AG04449 (cell line): ENCODE measurements at regions of chr2 and their contacts with region 1.

Region 1: GRCh38 chr2:20015472-20016083 is 3.1 kb upstream of the MATN3 start:
- DNase-seq: no peak
- H3K4me3 ChIP-seq: no peak overlapping the region
- CTCF ChIP-seq: peak; percentile 20

Region 2: GRCh38 chr2:19944205-19944845 is 71.3 kb before region 1 on chr2:
- CTCF ChIA-PET with region 1: interaction called, 13 read pairs
- POLR2A ChIA-PET with region 1: no interaction called
- DNase-seq: no peak
- H3K4me3 ChIP-seq: no peak overlapping the region
- CTCF ChIP-seq: no peak

Region 3: DNA sequence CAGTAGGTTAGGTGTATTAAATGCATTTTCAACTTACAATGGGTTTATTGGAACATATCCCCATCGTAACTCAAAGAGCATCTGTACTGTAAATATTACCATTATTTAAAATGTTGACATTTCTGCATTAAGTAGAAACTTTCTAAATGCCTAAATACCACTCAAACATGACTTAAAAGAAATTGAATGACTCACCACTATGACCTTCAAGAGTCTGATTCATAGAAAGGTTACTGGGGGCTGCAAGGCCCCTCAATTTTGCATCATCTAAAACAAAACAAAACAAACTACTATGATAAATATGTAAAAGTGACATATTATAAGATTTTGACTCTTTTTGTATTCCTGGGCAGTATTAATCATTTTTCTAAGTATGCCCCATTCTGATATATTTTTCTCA is 33.3 kb before region 1 on chr2:
- CTCF ChIA-PET with region 1: interaction called, 13 read pairs
- POLR2A ChIA-PET with region 1: no interaction called
- DNase-seq: no peak
- H3K4me3 ChIP-seq: no peak overlapping the region
- CTCF ChIP-seq: no peak

Region 4: GRCh38 chr2:20027705-20028434 is 12.3 kb after region 1 on chr2:
- CTCF ChIA-PET with region 1: interaction called, 84 read pairs
- POLR2A ChIA-PET with region 1: no interaction called
- DNase-seq: no peak
- H3K4me3 ChIP-seq: no peak overlapping the region
- CTCF ChIP-seq: no peak

Region 5: GRCh38 chr2:20062615-20063545 is 47.3 kb after region 1 on chr2:
- CTCF ChIA-PET with region 1: interaction called, 26 read pairs
- POLR2A ChIA-PET with region 1: no interaction called
- DNase-seq: peak; percentile 90
- H3K4me3 ChIP-seq: no peak overlapping the region
- CTCF ChIP-seq: no peak

Region 6: DNA sequence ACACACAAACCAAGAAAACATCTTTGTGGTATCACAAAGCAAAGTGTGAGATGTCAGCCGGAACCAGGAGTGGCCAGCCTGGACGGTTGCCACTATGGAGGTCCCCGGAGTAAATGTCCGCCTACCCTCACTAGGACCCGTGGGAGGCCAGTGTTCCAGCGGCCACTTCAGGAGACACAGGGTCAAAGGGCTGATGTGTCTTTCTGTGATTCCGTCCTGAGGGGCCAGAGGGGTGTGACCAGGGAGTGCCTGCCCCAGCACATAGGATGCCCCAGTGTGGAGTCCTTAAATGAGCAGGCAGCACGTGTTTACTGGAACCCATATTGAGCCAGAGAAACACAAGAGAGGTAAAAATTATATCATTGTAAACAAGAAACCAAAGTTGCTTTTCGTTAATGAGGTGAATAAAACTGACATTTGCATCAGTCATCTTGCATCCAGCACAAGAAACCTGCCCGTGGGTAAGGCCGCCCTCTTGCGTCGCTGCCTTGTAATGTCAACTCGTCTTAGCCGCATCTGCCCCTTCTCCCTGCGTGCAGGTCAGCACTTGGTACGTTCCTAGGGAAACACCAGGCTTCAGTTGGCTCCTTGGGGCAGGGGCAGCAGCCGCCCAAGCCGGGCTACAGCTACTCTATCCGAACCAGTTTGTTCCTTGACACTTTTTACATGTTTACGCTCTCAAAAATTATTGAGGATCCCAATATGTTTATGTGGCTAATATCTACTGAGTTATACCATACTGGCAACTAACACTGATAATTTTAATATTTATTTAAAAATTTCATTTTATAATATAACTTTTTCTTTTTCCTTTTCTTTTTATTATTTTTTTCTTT is 82.5 kb after region 1 on chr2:
- CTCF ChIA-PET with region 1: interaction called, 349 read pairs
- POLR2A ChIA-PET with region 1: interaction called, 6 read pairs
- DNase-seq: peak; percentile 47
- H3K4me3 ChIP-seq: no peak overlapping the region
- CTCF ChIP-seq: peak; percentile 93